Mammary epithelial cell (primary cell): ENCODE measurements at regions of chr11 and their contacts with region 1.

Region 1: DNA sequence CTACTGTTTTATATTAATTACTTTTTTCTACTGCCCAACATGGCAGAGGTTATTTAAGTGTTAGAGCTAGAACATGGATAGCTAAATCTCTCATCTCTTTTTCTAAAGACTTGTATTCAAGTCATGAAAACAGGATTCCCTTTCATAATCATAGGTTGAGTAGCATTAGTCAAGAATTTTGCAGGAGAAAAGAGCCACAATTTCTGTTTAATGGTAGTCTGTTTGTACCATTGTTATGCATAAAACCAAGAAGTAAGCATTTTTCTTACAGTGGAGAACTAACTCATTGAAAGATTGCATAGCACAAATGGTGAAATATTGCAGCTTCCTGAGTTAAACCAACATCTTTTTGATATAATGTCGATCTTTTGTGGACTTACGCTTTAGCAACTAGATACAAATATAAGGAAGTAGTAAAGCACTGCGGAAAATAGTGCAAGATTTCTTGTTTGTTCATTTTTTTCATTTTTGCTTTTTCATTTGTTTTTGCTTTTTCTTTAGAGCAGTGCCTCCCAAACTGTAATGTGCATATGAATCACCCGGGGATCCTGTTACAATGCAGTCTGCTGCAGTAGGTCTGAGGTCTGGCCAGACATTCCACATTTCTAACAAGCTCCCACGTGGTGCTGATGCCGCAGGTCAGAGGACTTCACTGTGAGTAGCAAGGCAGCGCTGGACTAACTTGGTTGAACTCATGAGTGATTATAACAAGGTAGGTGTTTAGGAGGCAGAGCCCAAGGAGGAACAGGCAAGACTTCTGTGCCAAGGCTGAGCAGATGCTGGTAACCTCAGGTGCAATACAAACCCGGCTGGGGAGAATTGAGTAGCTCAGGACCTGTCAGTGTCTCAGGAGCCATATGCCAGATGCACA is 4.6 kb downstream of the ETS1 start:
- DNase-seq: peak; percentile 49
- H3K4me3 ChIP-seq: no peak overlapping the region
- H3K27ac ChIP-seq: no peak overlapping the region
- H3K4me1 ChIP-seq: peaks cover 19% of the 10 kb centered on the region
- H3K27me3 ChIP-seq: no peaks in the 10 kb centered on the region
- CTCF ChIP-seq: no peak

Region 2: GRCh38 chr11:128482512-128483191 is 100.1 kb before region 1 on chr11:
- CTCF ChIA-PET with region 1: no interaction called
- dilution Hi-C with region 1: loop called (anchors 5 kb)
- in situ Hi-C with region 1: no loop called
- intact Hi-C with region 1: no loop called
- DNase-seq: no peak
- H3K4me3 ChIP-seq: no peak overlapping the region
- H3K27ac ChIP-seq: peak overlapping the region; percentile 3
- H3K4me1 ChIP-seq: peaks cover 24% of the 10 kb centered on the region
- H3K27me3 ChIP-seq: no peaks in the 10 kb centered on the region
- CTCF ChIP-seq: no peak

Region 3: DNA sequence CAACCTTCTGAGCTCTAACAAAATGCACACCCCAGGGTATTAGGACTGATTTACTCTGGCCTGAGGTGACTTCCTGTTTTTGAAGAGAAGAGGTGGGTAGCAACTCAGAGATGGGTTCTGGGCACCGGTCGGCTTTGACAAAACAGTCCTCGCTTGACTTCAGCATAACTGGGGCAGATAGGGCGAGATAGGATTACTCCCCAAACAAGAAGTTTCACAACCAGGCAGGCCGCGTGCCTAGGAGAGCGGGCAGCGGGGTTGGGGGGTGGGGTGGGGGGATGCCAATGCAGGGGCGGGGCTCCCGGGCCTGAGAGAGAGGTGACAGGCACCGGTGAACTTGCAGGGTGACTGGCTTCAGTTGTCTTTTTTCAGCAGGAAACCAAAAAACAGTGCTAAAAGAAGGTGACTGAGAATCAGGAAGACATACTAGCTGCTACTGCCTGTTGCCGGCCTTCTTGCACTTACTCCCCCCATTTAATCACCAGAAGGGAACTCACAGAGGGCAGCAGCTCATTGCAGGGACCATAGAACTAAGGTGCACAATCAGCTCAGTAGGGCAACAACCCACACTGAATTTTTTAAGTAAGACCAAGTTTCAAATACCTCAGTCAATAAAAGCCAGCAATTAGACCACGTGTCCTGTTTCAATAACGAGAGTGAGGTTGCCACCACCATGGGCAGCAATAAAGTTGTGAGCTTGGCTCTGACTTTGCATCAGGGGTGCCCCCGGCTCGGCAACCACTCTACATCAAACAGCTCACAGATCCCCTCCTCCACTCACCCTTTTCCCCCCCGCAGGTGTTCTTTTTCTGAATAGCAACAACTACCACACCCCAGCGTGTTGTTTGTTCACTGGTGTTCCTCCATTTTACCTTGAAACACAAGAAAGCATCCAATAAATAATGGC is 41.8 kb after region 1 on chr11:
- CTCF ChIA-PET with region 1: no interaction called
- dilution Hi-C with region 1: loop called (anchors 5 kb)
- in situ Hi-C with region 1: no loop called
- intact Hi-C with region 1: no loop called
- DNase-seq: no peak
- H3K4me3 ChIP-seq: no peak overlapping the region
- H3K27ac ChIP-seq: no peak overlapping the region
- H3K4me1 ChIP-seq: no peaks in the 10 kb centered on the region
- H3K27me3 ChIP-seq: no peaks in the 10 kb centered on the region
- CTCF ChIP-seq: no peak

Region 4: DNA sequence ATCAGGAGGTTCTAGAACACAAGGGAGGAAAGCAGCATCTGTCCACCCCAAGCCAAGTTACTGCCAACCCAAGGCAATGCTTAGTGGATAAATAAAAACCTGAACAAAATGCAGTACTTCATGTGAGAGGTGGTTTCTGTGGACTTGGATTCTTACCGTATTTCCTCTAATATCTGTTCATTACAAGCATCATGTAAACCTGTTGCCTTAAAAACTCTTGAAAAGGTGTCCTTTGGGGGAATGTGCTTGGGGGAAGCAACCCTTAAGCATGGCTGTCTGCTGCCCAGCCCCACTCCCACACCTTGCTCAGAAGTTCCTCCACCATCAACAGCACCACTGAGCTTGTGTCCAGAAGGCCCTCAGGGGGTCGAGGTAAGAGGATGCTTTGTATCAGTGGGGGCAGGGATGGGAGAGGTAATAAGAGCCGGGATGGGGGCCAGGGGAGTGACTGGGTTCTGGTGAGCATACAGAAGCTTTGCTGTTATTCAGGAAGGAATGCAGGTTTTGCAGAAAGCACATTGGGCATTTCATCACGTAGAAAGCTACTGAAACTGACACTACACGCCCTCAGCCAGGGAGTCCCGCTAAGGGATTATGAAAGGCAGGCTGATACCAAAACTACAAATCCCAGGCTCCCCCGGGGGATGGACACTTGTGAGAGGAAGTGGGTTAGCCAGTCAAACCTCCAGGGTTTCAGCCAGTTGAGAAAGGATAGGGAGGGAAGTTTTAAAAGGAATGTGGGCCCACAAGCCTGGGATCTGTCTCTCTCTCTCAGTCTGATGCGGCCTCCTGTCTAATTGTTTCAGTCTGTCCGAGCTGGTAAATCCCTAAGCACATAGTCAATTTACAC is 232.3 kb after region 1 on chr11:
- CTCF ChIA-PET with region 1: no interaction called
- dilution Hi-C with region 1: no loop called
- in situ Hi-C with region 1: no loop called
- intact Hi-C with region 1: loop called (anchors 2 kb)
- DNase-seq: peak; percentile 76
- H3K4me3 ChIP-seq: no peak overlapping the region
- H3K27ac ChIP-seq: no peak overlapping the region
- H3K4me1 ChIP-seq: no peaks in the 10 kb centered on the region
- H3K27me3 ChIP-seq: no peaks in the 10 kb centered on the region
- CTCF ChIP-seq: no peak